ENCODE measurements at regions of chr3 and their contacts with region 1.

Region 1: DNA sequence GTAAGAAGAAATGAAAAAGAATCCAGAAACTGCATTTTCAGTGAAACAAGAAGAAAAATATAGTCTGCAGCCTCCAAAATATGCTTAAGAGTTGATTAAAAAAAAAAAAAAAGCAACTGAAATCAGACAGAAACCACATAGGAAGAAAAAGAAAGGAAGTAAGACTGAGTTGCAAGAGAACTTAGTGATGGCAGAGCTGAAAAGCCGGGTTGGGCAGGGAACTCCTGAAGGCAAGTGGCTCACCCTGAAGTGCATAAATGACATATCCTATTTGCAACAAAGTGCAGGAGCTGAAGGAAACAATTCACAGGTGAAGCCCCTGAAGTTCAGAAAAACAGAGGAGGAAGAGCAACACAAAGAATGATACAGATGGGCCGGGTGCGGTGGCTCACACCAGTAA is 108.8 kb upstream of the SLC25A36 start:
- DNase-seq: no peak
- H3K4me3 ChIP-seq: no peak overlapping the region
- H3K27ac ChIP-seq: no peak overlapping the region
- H3K4me1 ChIP-seq: peaks cover 5% of the 10 kb centered on the region
- H3K27me3 ChIP-seq: no peaks in the 10 kb centered on the region
- CTCF ChIP-seq: no peak

Region 2: DNA sequence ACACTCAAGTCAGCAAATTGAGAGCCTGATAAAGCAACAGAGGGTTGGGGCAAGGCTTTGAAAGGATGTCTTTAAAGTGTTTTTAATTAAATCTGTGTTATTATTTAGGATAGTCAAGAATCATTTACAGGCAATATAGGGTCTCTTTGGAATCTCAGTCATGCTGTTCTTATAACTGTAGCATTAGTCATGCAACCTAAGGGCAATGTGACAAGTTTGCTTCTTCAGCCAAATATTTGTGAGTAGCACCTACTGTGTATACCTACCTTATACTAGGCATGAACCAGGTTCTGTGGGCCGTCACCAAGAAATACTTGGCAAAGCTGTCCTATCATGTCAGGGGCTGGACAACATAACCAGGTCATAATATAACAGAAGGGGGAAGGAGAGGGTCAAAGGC is 339.6 kb before region 1 on chr3:
- CTCF ChIA-PET with region 1: no interaction called
- POLR2A ChIA-PET with region 1: no interaction called
- intact Hi-C with region 1: no loop called
- DNase-seq: no peak
- H3K4me3 ChIP-seq: no peak overlapping the region
- H3K27ac ChIP-seq: no peak overlapping the region
- H3K4me1 ChIP-seq: no peaks in the 10 kb centered on the region
- H3K27me3 ChIP-seq: no peaks in the 10 kb centered on the region
- CTCF ChIP-seq: no peak

Region 3: GRCh38 chr3:140842984-140843649 is 10.2 kb after region 1 on chr3:
- CTCF ChIA-PET with region 1: no interaction called
- POLR2A ChIA-PET with region 1: interaction called, 10 read pairs
- intact Hi-C with region 1: no loop called
- DNase-seq: no peak
- H3K4me3 ChIP-seq: no peak overlapping the region
- H3K27ac ChIP-seq: no peak overlapping the region
- H3K4me1 ChIP-seq: no peaks in the 10 kb centered on the region
- H3K27me3 ChIP-seq: no peaks in the 10 kb centered on the region
- CTCF ChIP-seq: no peak